GM18951 (cell line): ENCODE measurements at regions of chr15 and their contacts with region 1.

Region 1: GRCh38 chr15:38667890-38668832 is 103.5 kb upstream of the RASGRP1 start:
- POLR2A ChIP-seq: no peak

Region 2: GRCh38 chr15:38193496-38193895 is 474.7 kb before region 1 on chr15:
- in situ Hi-C with region 1: no loop called
- POLR2A ChIP-seq: no peak

Region 3: GRCh38 chr15:38565284-38565665 is 102.9 kb before region 1 on chr15:
- in situ Hi-C with region 1: loop called (anchors 5 kb)
- POLR2A ChIP-seq: no peak

Region 4: GRCh38 chr15:38782156-38782555 is 114.0 kb after region 1 on chr15:
- in situ Hi-C with region 1: no loop called
- POLR2A ChIP-seq: no peak